AG04450 (cell line): ENCODE measurements at regions of chr19 and their contacts with region 1.

Region 1: GRCh38 chr19:54674021-54674617 is 11.3 kb downstream of the LILRB4 start:
- DNase-seq: no peak
- H3K4me3 ChIP-seq: no peak overlapping the region
- H3K27ac ChIP-seq: no peak overlapping the region
- H3K27me3 ChIP-seq: no peaks in the 10 kb centered on the region
- CTCF ChIP-seq: peak; percentile 34; the same call in 1 of the 2 replicates

Region 2: GRCh38 chr19:54481322-54481930 is 192.7 kb before region 1 on chr19:
- CTCF ChIA-PET with region 1: interaction called, 33 read pairs
- POLR2A ChIA-PET with region 1: no interaction called
- DNase-seq: no peak
- H3K4me3 ChIP-seq: no peak overlapping the region
- H3K27ac ChIP-seq: no peak overlapping the region
- H3K27me3 ChIP-seq: no peaks in the 10 kb centered on the region
- CTCF ChIP-seq: peak; percentile 79

Region 3: DNA sequence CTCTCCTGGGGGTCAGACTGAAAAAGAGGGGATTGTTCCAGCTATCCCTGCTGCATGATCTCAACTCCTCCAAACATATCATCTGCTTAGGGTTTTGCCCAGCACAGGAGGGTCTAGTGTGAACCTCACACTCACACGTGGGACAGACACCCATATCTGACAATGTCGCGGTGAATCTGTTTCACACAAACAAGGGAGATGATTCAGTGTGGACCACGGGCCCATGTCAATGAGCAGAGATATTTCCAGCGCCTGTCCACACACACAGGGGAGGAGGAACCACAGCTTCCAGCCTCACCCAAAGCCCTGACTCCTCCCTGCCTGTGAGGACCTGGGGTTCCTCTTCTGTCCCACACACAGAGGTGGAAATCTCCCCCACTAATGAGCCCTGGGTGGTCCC is 20.5 kb after region 1 on chr19:
- CTCF ChIA-PET with region 1: no interaction called
- POLR2A ChIA-PET with region 1: no interaction called
- DNase-seq: no peak
- H3K4me3 ChIP-seq: no peak overlapping the region
- H3K27ac ChIP-seq: no peak overlapping the region
- H3K27me3 ChIP-seq: no peaks in the 10 kb centered on the region
- CTCF ChIP-seq: no peak

Region 4: DNA sequence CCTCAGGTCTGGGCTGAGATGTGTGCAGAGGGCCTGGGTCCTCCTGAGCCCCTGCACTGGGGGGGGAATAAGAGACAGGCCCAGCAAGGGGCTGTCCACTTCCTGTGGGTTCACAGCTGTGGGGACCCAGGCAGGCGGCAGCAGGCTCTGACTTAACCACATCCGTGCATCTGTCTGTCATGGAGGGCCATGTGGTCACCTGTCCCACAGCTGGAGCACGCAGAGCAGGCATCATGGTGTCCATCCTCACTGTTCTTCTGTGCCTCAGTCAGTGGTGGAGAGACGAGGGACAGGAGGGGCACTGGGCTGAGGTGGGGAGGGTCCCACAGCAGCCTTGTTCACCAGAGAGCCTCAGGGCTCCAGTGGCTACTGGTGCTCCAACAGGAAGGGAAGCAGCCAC is 33.8 kb after region 1 on chr19:
- CTCF ChIA-PET with region 1: no interaction called
- POLR2A ChIA-PET with region 1: no interaction called
- DNase-seq: no peak
- H3K4me3 ChIP-seq: no peak overlapping the region
- H3K27ac ChIP-seq: no peak overlapping the region
- H3K27me3 ChIP-seq: no peaks in the 10 kb centered on the region
- CTCF ChIP-seq: no peak